H1 (cell line): ENCODE measurements at regions of chr11 and their contacts with region 1.

Region 1: GRCh38 chr11:116691771-116692177 is 81.0 kb downstream of the BUD13 start:
- DNase-seq: peak in 1 of 2 experiments; percentile 95
- H3K4me3 ChIP-seq: no peak overlapping the region
- H3K27ac ChIP-seq: no peak overlapping the region
- H3K4me1 ChIP-seq: peaks cover 10 to 26% (median 19%) of the 10 kb centered on the region in 4 experiments
- H3K27me3 ChIP-seq: no peaks in the 10 kb centered on the region; a peak in 1 of 7 replicates
- CTCF ChIP-seq: peak; percentile 93 to 95 (median 93)
- EP300 ChIP-seq: no peak
- POLR2A ChIP-seq: no peak
- RAD21 ChIP-seq: peak; percentile 99

Region 2: GRCh38 chr11:116481126-116481644 is 210.6 kb before region 1 on chr11:
- CTCF ChIA-PET with region 1: no interaction called
- POLR2A ChIA-PET with region 1: no interaction called
- DNase-seq: no peak
- H3K4me3 ChIP-seq: no peak overlapping the region
- H3K27ac ChIP-seq: no peak overlapping the region
- H3K4me1 ChIP-seq: no peaks in the 10 kb centered on the region
- H3K27me3 ChIP-seq: no peaks in the 10 kb centered on the region
- CTCF ChIP-seq: no peak
- EP300 ChIP-seq: no peak
- POLR2A ChIP-seq: no peak
- RAD21 ChIP-seq: no peak

Region 3: DNA sequence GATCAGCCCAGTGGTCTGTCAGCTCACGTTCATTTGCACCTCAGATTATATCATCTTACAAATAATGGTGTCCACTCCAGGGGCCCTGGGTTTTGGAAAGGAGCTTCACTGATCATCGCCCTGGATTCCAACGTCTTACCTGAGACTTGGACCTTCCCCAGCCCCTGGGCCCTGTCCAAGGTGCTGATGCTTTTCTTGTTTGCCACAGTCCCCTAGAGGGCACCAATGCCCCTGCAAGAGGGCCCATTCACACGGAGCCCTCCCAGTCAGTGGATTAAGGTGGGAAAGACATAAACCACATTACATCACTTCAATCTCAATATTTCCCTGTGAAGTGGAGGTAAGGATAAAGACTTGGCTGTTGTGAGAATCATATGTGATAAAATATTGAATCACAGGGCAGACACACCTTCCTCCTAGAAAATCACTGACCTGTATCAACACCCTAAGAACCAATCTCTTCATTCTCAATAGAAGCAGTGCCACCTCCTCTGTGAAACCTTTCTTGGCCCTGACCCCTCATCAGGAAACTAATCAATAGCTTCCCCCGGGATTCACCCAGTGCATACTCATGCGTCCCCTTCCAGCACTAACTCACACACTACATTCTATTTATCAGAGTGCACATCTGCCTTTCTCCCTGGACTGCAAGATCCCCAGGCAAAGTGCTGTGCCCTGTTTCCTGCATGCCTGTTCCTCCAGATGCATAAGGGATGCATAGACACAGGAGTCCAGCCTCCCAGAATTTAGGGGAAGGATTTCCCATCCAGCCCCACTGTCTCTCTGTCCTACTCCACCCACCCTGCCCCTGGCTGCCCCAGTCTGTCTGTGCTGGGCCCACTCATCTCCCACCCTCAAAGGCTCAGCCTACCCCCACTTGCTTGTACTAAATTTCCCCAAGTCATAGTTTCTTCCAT is 86.0 kb before region 1 on chr11:
- CTCF ChIA-PET with region 1: interaction called, 28 read pairs
- POLR2A ChIA-PET with region 1: no interaction called
- DNase-seq: peak; percentile 58 to 96
- H3K4me3 ChIP-seq: no peak overlapping the region
- H3K27ac ChIP-seq: no peak overlapping the region
- H3K4me1 ChIP-seq: no peaks in the 10 kb centered on the region
- H3K27me3 ChIP-seq: no peaks in the 10 kb centered on the region
- CTCF ChIP-seq: peak; percentile 81 to 93 (median 86)
- EP300 ChIP-seq: no peak
- POLR2A ChIP-seq: no peak
- RAD21 ChIP-seq: peak; percentile 69 to 79

Region 4: GRCh38 chr11:116648247-116649174 is 43.3 kb before region 1 on chr11:
- CTCF ChIA-PET with region 1: interaction called, 57 read pairs
- POLR2A ChIA-PET with region 1: interaction called, 4 read pairs
- DNase-seq: no peak
- H3K4me3 ChIP-seq: no peak overlapping the region
- H3K27ac ChIP-seq: no peak overlapping the region
- H3K4me1 ChIP-seq: peaks cover 2 to 7% (median 4%) of the 10 kb centered on the region in 4 experiments; a peak in 4 of 7 replicates
- H3K27me3 ChIP-seq: no peaks in the 10 kb centered on the region
- CTCF ChIP-seq: no peak
- EP300 ChIP-seq: no peak
- POLR2A ChIP-seq: no peak
- RAD21 ChIP-seq: no peak

Region 5: GRCh38 chr11:116715383-116715782 is 23.6 kb after region 1 on chr11:
- CTCF ChIA-PET with region 1: interaction called, 34 read pairs
- POLR2A ChIA-PET with region 1: interaction called, 3 read pairs
- DNase-seq: no peak
- H3K4me3 ChIP-seq: no peak overlapping the region
- H3K27ac ChIP-seq: no peak overlapping the region
- H3K4me1 ChIP-seq: peaks cover 0 to 19% (median 11%) of the 10 kb centered on the region in 4 experiments; a peak in 6 of 7 replicates
- H3K27me3 ChIP-seq: peaks cover 0 to 6% (median 4%) of the 10 kb centered on the region in 4 experiments; a peak in 3 of 7 replicates
- CTCF ChIP-seq: peak; percentile 48 to 62 (median 59)
- EP300 ChIP-seq: no peak
- POLR2A ChIP-seq: no peak
- RAD21 ChIP-seq: peak in 1 of 2 experiments; percentile 30; a peak in 2 of 4 replicates

Region 6: GRCh38 chr11:117375960-117376359 is 684.2 kb after region 1 on chr11:
- CTCF ChIA-PET with region 1: no interaction called
- POLR2A ChIA-PET with region 1: no interaction called
- DNase-seq: no peak
- H3K4me3 ChIP-seq: no peak overlapping the region
- H3K27ac ChIP-seq: no peak overlapping the region
- H3K4me1 ChIP-seq: no peaks in the 10 kb centered on the region
- H3K27me3 ChIP-seq: no peaks in the 10 kb centered on the region
- CTCF ChIP-seq: no peak
- EP300 ChIP-seq: no peak
- POLR2A ChIP-seq: no peak
- RAD21 ChIP-seq: no peak